Naive thymus-derived CD4-positive, alpha-beta T cell (primary cell): ENCODE measurements at regions of chr4 and their contacts with region 1.

Region 1: DNA sequence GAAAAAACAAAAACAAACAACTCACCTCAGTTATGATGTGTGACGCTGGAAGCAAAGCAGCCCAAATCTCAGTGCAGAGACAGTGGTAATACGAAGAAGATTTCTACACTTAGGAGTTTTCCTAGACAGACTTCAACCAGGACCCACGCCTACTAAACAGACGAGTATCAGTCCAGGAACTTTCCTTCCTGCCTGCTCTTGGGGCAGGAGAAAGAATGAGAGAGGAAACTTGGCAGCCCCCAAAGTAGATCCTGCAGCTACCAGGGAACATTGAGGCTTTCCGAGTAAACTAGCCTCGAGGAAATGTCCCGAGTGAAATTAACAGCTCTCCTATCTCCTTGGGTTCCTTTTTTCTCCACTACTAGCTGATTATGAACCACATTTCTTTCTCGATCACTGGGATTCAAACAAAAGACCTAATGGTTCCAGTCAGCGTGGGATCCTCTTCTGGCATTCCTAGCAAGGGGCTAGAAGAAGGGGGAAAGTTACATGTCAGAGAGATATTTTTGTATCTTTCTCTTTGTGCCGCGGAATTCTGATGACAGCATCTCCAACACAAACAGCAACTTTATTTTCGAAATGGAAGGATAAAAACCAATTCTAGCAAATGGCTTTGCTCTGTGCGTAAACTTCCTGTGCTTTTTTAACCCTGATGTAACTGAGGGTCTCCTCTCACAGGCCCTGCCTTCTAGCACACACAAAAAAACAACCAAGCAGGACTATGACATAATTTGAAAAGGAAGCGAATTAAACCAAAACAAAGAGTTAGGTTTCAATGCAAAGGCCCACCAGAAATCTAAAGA is 53.2 kb downstream of the PPM1K start:
- DNase-seq: peak in 6 of 9 donors; percentile 7 to 68 (median 30)
- ATAC-seq: peak; percentile 18
- H3K4me3 ChIP-seq: peak overlapping the region; percentile 11
- H3K4me3 Mint-ChIP-seq: peak overlapping the region in 9 of 10 donors; percentile 21 to 85 (median 58)
- H3K27ac ChIP-seq: peak overlapping the region; percentile 55
- H3K27ac Mint-ChIP-seq: peak overlapping the region; percentile 63 to 89 (median 79)
- H3K4me1 ChIP-seq: peaks cover 0 to 8% of the 10 kb centered on the region in 2 donors
- H3K4me1 Mint-ChIP-seq: peaks cover 3 to 31% (median 19%) of the 10 kb centered on the region in 7 donors
- H3K27me3 ChIP-seq: no peaks in the 10 kb centered on the region
- H3K27me3 Mint-ChIP-seq: peaks cover 0 to 12% (median 0%) of the 10 kb centered on the region in 5 donors

Region 2: DNA sequence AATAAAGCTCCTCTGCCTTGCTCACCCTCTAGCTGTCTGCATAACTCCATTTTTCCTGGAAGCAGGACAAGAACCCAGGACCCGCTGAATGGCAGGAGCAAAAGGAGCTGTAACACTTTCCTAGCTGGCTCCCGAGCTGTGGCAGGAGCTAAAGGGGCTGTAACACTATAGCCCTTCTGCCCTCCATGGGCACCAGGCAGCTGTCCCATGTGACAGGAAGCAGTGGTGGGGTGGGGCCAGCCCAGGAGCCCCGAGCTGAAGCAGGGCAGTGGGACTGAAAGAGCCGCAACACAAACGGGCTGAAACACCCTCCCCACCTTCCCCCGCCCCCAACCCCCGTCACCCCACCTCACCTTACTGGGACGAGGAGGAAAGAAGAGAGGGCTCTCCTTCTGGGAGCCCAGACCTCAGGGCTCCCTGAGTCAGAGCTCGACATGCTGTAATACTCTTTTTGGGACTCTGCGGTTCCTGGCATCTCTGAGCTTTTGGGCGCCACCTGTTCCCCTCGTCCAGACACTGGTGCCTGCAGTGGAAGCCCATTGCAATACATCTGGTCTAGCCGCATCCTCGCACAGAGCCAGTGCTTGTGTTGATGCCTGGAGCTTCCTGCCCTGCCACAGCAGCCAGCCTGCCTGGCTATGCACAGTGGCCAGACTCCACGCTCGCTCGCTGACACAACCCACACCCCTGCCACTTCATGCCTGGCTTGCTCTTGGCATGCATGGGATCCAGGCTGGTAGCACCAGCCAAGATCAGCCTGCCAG is 13.8 kb after region 1 on chr4:
- CTCF ChIA-PET with region 1: interaction called, 4 read pairs
- POLR2A ChIA-PET with region 1: interaction called, 6 read pairs
- intact Hi-C with region 1: loop called in 1 of 2 experiments (anchors 2 kb)
- DNase-seq: peak; percentile 14 to 45 (median 28)
- ATAC-seq: peak; percentile 80
- H3K4me3 ChIP-seq: peak overlapping the region; percentile 46
- H3K4me3 Mint-ChIP-seq: peak overlapping the region; percentile 39 to 86 (median 76)
- H3K27ac ChIP-seq: no peak overlapping the region
- H3K27ac Mint-ChIP-seq: peak overlapping the region in 8 of 9 donors; percentile 17 to 86 (median 55)
- H3K4me1 ChIP-seq: peaks cover 0 to 4% of the 10 kb centered on the region in 2 donors
- H3K4me1 Mint-ChIP-seq: peaks cover 7 to 19% (median 16%) of the 10 kb centered on the region in 7 donors
- H3K27me3 ChIP-seq: no peaks in the 10 kb centered on the region
- H3K27me3 Mint-ChIP-seq: peaks cover 0 to 2% (median 0%) of the 10 kb centered on the region in 5 donors